ENCODE measurements at regions of chr18 and their contacts with region 1.

Region 1: DNA sequence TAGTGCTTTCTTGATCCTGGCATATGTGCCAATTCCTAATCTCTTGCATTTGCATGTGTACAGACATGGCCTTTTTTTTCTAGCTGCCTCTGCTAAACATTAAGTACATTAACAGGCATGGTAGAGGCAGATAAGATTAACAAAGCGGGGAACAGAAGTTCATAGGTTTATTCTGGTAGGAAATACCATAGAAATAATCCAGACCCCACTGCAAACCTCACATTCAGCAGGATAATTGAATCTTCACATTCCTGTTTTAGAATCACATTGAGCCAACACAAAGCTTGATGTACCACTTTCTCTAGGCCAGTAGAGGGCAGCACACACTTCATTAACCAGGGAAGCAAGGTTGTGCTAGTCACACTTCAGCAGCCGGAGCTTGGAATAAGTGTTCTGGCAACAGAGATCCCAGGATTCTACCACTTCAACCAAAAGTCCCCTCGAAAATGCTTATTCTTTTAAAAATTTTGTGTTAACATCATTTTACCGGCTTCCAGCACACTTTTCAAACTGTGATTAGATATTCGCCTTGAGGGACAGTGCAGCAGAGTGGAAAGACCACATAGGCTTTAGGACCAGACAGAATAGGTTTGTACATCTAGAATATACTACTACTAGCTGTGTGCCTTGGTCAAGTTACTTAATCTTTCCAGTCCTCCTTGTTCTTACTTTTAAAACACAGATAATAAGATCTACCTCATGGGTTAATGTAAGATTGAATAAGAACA is 420.2 kb upstream of the CHST9 start:
- DNase-seq: peak; percentile 61
- ATAC-seq: peak; percentile 89
- H3K4me3 Mint-ChIP-seq: no peak overlapping the region
- H3K27ac Mint-ChIP-seq: 0 out of 2 replicates have a peak overlapping the region, but pooled peaks have one; percentile 51
- H3K4me1 Mint-ChIP-seq: peaks cover 25% of the 10 kb centered on the region
- H3K27me3 Mint-ChIP-seq: no peaks in the 10 kb centered on the region
- CTCF ChIP-seq: peak; percentile 83

Region 2: GRCh38 chr18:27363872-27364271 is 241.4 kb before region 1 on chr18:
- CTCF ChIA-PET with region 1: interaction called, 13 read pairs
- POLR2A ChIA-PET with region 1: no interaction called
- DNase-seq: no peak
- ATAC-seq: peak; percentile 57
- H3K4me3 Mint-ChIP-seq: no peak overlapping the region
- H3K27ac Mint-ChIP-seq: no peak overlapping the region
- H3K4me1 Mint-ChIP-seq: no peaks in the 10 kb centered on the region
- H3K27me3 Mint-ChIP-seq: no peaks in the 10 kb centered on the region; the same call in 1 of the 2 replicates
- CTCF ChIP-seq: no peak

Region 3: DNA sequence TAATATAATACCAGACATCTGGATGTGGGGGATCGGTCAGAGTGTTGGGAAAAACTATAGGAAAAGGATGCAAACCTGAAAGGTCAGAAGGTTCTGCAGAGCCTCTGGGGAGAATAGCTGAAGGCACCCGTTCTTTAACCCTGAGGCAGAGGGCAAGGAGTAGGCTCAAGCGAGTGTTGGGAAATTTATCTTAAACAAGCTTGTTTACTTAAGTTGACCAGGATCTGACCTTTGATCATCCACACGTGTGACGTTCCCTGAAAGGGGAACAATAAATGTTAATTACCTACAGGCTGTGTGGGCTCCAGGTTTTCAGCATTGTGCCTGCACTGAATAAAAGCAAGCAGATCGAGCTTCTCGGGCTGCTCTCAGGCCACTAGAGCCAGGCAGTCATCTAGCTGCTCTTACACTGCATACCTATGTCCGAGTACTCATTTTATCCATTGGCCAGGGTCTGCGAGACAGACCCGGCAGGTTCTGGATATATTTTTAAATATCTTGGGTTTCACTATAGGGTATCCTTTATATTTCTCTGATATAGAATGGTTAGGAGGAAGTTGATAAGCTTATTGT is 19.6 kb before region 1 on chr18:
- CTCF ChIA-PET with region 1: interaction called, 11 read pairs
- POLR2A ChIA-PET with region 1: no interaction called
- DNase-seq: no peak
- ATAC-seq: no peak
- H3K4me3 Mint-ChIP-seq: no peak overlapping the region
- H3K27ac Mint-ChIP-seq: no peak overlapping the region
- H3K4me1 Mint-ChIP-seq: no peaks in the 10 kb centered on the region
- H3K27me3 Mint-ChIP-seq: no peaks in the 10 kb centered on the region
- CTCF ChIP-seq: no peak

Region 4: DNA sequence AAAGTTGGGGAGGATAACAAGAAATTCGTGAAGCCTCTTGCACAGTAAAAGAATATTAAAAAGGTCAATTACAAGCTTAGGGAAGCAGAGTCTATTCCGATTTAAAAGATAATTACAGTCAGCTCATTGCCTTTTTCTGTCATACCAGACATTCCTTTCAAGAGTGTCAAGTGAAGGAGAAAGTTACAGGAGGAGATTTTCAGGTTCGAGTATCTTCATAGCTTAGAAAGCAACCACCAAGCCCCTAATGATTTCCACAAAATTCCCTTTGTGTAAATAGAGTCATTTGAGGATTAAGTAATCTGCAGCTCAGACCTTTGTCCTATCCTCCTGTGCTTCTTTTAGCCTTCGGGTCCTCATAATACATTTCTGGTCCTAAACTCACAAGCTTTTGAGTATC is 156.8 kb after region 1 on chr18:
- CTCF ChIA-PET with region 1: interaction called, 11 read pairs
- POLR2A ChIA-PET with region 1: no interaction called
- DNase-seq: no peak
- ATAC-seq: no peak
- H3K4me3 Mint-ChIP-seq: no peak overlapping the region
- H3K27ac Mint-ChIP-seq: no peak overlapping the region
- H3K4me1 Mint-ChIP-seq: peaks cover 19% of the 10 kb centered on the region
- H3K27me3 Mint-ChIP-seq: no peaks in the 10 kb centered on the region
- CTCF ChIP-seq: no peak

Measured in WTC11 (cell line).